HepG2 (cell line): ENCODE measurements at regions of chr16 and their contacts with region 1.

Region 1: DNA sequence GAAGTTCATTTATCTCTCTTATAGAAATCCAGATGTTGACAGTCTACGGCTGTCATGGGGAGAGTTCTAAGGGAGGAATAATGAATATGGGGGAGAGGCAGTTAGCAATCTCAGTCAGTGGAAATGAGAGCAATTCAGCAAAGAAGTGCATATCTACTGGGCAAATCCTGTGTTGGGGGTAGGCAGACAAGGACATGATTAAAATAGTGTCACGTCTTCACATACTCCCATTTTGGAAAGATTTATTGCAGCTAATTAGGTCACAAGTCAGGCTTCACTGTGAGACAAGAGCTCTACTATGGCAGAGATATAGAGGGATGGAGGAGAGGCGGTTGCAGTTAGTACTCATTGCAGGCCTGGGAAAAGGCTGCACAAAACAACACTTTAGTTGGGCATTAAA is 29.8 kb downstream of the LRRC36 start:
- DNase-seq: no peak
- ATAC-seq: no peak
- H3K4me3 ChIP-seq: no peak overlapping the region
- H3K27ac ChIP-seq: no peak overlapping the region
- H3K4me1 ChIP-seq: peaks cover 28% of the 10 kb centered on the region
- H3K27me3 ChIP-seq: no peaks in the 10 kb centered on the region
- CTCF ChIP-seq: no peak
- EP300 ChIP-seq: no peak
- POLR2A ChIP-seq: no peak
- RAD21 ChIP-seq: no peak

Region 2: GRCh38 chr16:67383284-67383683 is 26.9 kb after region 1 on chr16:
- CTCF ChIA-PET with region 1: no interaction called
- POLR2A ChIA-PET with region 1: no interaction called
- in situ Hi-C with region 1: no loop called
- intact Hi-C with region 1: loop called (anchors 2 kb)
- DNase-seq: no peak
- ATAC-seq: no peak
- H3K4me3 ChIP-seq: no peak overlapping the region
- H3K27ac ChIP-seq: no peak overlapping the region
- H3K4me1 ChIP-seq: no peaks in the 10 kb centered on the region
- H3K27me3 ChIP-seq: peaks cover 3 to 34% of the 10 kb centered on the region in 2 experiments; a peak in 3 of 5 replicates
- CTCF ChIP-seq: no peak
- EP300 ChIP-seq: no peak
- POLR2A ChIP-seq: no peak
- RAD21 ChIP-seq: no peak

Region 3: GRCh38 chr16:67396159-67397035 is 40.0 kb after region 1 on chr16:
- CTCF ChIA-PET with region 1: no interaction called
- POLR2A ChIA-PET with region 1: no interaction called
- in situ Hi-C with region 1: no loop called
- intact Hi-C with region 1: no loop called
- DNase-seq: peak; percentile 96
- ATAC-seq: peak; percentile 57
- H3K4me3 ChIP-seq: peak overlapping the region in 1 of 3 experiments; percentile 57; a peak in 4 of 6 replicates
- H3K27ac ChIP-seq: no peak overlapping the region
- H3K4me1 ChIP-seq: peaks cover 44% of the 10 kb centered on the region
- H3K27me3 ChIP-seq: peaks cover 0 to 34% of the 10 kb centered on the region in 2 experiments; a peak in 4 of 5 replicates
- CTCF ChIP-seq: 0 out of 2 replicates have a peak, but pooled peaks have one; percentile 11
- EP300 ChIP-seq: peak in 1 of 2 experiments; percentile 97; a peak in 2 of 4 replicates
- POLR2A ChIP-seq: no peak
- RAD21 ChIP-seq: no peak

Region 4: DNA sequence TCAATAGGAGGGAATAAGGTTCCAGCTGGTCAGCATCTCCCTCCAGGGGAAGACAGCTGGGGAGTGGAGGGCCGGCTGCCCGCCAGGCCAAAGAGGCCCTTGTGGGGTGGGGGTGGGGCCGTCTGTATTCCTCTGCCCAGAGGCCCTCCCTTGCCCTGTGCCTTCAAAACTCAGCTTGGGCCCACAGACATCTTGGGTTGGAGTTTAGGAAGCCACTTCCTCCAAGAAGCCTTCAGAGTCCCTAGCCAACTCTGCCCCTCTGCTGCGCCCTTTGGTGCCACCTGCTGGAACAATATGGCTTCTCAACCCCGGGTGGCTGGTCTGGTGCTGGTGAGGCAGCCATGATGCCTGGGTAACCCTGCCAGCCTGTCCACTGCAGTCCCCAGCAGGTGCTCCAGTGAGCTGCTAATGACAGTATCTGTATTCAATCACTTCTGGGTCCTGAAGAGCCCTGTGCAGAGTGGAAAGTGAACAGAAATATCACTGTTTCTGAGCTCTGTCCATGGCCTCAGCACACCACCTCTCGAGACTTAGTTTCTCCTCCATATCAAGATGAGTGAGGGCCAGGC is 91.2 kb after region 1 on chr16:
- CTCF ChIA-PET with region 1: no interaction called
- POLR2A ChIA-PET with region 1: no interaction called
- in situ Hi-C with region 1: no loop called
- intact Hi-C with region 1: no loop called
- DNase-seq: peak; percentile 49
- ATAC-seq: peak; percentile 2; the same call in 1 of the 3 replicates
- H3K4me3 ChIP-seq: no peak overlapping the region
- H3K27ac ChIP-seq: peak overlapping the region; percentile 88
- H3K4me1 ChIP-seq: peaks cover 67% of the 10 kb centered on the region
- H3K27me3 ChIP-seq: no peaks in the 10 kb centered on the region
- CTCF ChIP-seq: peak; percentile 93
- EP300 ChIP-seq: no peak
- POLR2A ChIP-seq: no peak
- RAD21 ChIP-seq: peak; percentile 76